Activated CD8-positive, alpha-beta T cell treated with anti-CD3 and anti-CD28 coated beads, Interleukin-2, amount 10 ng/mL, durations not matched to agents 7 days and 5 days (primary cell): ENCODE measurements at regions of chr19 and their contacts with region 1.

Region 1: GRCh38 chr19:50537762-50538230 is 24.1 kb upstream of the ASPDH start:
- DNase-seq: peak; percentile 72
- ATAC-seq: peak; percentile 65
- H3K4me3 Mint-ChIP-seq: no peak overlapping the region
- H3K27ac Mint-ChIP-seq: no peak overlapping the region
- H3K4me1 Mint-ChIP-seq: no peaks in the 10 kb centered on the region
- H3K27me3 Mint-ChIP-seq: no peaks in the 10 kb centered on the region

Region 2: DNA sequence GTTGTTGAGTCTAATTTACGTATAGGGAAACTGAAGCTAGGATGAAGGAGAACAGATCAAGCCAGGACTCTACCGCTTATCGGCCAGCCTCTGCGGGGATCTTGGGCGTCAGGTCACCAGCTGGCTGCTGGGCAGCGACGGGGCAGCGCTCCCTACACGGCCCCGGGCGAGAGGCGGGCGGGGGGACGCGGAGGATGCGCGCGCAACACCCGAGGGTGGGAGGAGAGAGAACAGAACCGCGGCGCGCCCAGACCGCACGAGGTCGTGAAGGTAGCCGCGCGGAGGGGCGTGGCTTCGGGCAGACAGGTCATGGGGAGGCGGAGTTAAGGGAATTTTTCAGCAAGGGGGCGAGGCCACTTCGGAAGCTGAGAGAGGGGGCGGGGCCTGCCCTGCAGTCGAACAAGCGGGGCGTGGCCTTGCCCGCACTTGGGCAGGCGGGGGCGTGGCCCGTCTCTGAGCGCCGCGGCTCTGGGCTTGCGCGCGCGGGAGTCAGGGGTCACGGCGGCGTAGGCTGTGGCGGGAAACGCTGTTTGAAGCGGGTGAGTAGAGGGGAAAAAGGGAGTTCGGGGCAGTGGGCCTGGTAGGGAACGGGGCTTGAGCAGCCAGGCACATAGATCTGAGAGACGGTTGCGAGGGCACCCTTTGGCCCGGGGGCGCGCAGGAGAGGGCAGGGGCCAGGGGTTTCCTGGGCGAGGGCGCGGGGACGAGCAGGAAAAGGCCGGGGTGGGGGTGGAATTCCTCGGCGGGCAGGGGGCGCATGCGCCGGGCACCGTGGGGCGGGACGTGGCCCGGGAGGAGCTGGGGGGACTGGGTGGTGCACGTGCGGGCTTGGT is 153.7 kb before region 1 on chr19 and contains the start of gene POLD1:
- CTCF ChIA-PET with region 1: no interaction called
- POLR2A ChIA-PET with region 1: no interaction called
- DNase-seq: peak; percentile 99
- ATAC-seq: peak; percentile 89
- H3K4me3 Mint-ChIP-seq: peak within 1 kb of the TSS; percentile 94
- H3K27ac Mint-ChIP-seq: peak within 1 kb of the TSS; percentile 98
- H3K4me1 Mint-ChIP-seq: peaks cover 32% of the 10 kb centered on the region
- H3K27me3 Mint-ChIP-seq: no peaks in the 10 kb centered on the region
- total RNA-seq, gene POLD1: 163 to 181 TPM

Region 3: GRCh38 chr19:50476224-50476942 is 61.4 kb before region 1 on chr19 and contains the starts of genes EMC10 and GARIN5A:
- CTCF ChIA-PET with region 1: no interaction called
- POLR2A ChIA-PET with region 1: no interaction called
- DNase-seq: peak; percentile 95
- ATAC-seq: peak; percentile 96
- H3K4me3 Mint-ChIP-seq: peak within 1 kb of the TSS; percentile 99
- H3K27ac Mint-ChIP-seq: peak within 1 kb of the TSS; percentile 95
- H3K4me1 Mint-ChIP-seq: peaks cover 16% of the 10 kb centered on the region
- H3K27me3 Mint-ChIP-seq: no peaks in the 10 kb centered on the region
- total RNA-seq, gene EMC10: 54.8 to 56.9 TPM
- total RNA-seq, gene GARIN5A: 0.29 TPM in 1 of 2 experiments, not detected in the other

Region 4: DNA sequence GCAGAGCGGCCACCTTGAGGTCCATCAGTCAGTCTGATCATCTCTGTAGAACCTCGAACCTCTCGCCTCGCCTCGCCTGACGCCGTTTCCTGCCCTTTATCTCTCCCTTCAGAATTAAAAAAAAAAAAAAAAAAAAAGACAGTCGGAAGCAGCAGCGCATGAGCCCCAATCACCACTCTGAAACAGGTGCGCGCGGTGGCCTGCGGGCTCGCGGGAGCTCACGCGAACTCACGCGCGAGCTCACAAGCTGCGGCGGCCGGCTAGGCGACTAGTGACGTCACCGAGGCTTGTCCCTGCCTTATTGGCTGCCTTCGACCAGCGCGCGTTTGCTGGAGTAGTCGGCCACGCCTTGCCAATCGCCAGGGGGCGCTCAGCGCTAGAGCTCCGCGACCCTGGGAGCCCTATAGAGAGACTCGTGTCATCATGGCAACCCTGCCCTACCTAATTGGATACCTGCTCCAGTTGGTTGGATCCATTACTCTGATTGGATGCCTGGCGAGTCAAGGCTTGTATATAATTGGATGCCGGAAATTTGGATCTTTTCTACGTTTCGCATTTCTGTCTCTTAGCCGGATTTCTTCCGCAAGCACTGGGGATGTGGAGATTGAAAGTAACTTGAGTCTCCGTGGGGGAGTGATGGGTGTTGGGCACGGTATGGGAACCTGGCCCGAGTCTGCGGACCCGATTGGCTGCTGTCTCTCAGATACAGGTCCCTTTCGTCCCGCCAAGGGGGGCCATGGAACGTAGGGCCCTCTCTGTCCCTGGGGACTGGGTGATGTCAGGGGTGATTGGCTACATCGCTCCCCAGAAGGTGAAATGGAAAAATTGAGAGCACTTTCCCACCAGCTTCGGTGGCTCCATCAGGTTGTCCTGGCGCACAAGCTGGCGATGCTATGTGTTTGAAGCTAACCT is 70.3 kb after region 1 on chr19:
- CTCF ChIA-PET with region 1: no interaction called
- POLR2A ChIA-PET with region 1: no interaction called
- DNase-seq: peak; percentile 84
- ATAC-seq: peak; percentile 91
- H3K4me3 Mint-ChIP-seq: peak overlapping the region; percentile 17
- H3K27ac Mint-ChIP-seq: no peak overlapping the region
- H3K4me1 Mint-ChIP-seq: peaks cover 9% of the 10 kb centered on the region
- H3K27me3 Mint-ChIP-seq: peaks cover 5% of the 10 kb centered on the region

Region 5: DNA sequence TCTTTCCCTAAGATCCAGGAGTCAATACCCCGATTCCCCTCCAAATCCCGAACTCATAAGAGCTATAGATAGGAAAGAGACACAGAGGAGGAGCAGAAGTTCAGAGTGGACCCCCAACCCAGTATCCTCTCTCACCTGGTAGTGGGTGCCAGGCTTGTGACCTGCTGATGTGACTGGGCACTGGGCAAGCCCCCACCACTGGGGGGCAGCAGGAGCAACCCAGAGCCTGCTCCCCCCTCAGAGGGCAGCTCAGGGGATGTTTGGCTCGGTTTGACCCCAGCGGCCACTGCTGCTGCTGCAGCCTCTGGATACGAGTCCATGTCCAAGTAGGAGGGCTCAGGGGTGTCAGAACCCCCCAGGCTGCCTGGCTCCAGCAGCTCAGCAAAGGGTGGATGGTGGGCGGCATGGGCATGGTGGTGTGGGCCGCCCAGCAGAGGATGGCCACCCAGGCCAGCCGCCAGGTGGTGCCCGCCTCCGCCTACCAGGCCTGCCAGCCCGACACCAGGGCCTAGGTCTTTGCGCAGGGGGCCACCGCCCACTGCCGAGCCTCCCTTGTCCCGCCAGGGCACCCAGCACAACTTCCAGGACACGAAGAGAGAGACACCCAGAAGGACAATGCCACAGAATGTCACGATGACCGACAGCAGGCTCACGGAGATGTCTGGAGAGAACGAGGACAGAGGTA is 94.5 kb after region 1 on chr19:
- CTCF ChIA-PET with region 1: no interaction called
- POLR2A ChIA-PET with region 1: no interaction called
- DNase-seq: no peak
- ATAC-seq: no peak
- H3K4me3 Mint-ChIP-seq: no peak overlapping the region
- H3K27ac Mint-ChIP-seq: no peak overlapping the region
- H3K4me1 Mint-ChIP-seq: no peaks in the 10 kb centered on the region
- H3K27me3 Mint-ChIP-seq: peaks cover 7% of the 10 kb centered on the region

Region 6: GRCh38 chr19:50784710-50785109 is 246.9 kb after region 1 on chr19:
- CTCF ChIA-PET with region 1: interaction called, 10 read pairs
- POLR2A ChIA-PET with region 1: no interaction called
- DNase-seq: no peak
- ATAC-seq: no peak
- H3K4me3 Mint-ChIP-seq: no peak overlapping the region
- H3K27ac Mint-ChIP-seq: no peak overlapping the region
- H3K4me1 Mint-ChIP-seq: peaks cover 6% of the 10 kb centered on the region
- H3K27me3 Mint-ChIP-seq: peaks cover 10% of the 10 kb centered on the region